Head of caudate nucleus (tissue), 42 donors: ENCODE measurements at regions of chr17 and their contacts with region 1.

Region 1: DNA sequence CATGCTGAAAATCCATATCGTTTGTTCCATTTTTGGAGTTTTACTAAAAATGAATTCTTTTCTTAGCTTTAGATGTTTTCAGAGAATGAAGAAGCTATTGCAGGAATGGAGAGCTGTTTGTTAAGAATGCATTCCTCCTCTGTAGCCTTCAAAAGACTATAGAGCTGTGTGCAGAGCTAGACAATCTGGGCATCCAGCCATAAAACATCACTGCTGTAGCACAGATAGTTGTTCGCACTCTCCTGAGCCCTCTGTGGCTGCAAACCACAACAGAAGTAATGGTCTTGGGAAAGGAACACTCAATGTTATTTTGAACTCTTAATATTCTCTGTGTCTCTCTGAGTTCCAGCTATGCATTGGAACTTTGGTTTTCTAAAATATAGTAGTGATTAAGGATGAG is 4.9 kb downstream of the TNRC6C start:
- DNase-seq: peak in 32 of 42 donors; percentile 24 to 87 (median 67)

Region 2: DNA sequence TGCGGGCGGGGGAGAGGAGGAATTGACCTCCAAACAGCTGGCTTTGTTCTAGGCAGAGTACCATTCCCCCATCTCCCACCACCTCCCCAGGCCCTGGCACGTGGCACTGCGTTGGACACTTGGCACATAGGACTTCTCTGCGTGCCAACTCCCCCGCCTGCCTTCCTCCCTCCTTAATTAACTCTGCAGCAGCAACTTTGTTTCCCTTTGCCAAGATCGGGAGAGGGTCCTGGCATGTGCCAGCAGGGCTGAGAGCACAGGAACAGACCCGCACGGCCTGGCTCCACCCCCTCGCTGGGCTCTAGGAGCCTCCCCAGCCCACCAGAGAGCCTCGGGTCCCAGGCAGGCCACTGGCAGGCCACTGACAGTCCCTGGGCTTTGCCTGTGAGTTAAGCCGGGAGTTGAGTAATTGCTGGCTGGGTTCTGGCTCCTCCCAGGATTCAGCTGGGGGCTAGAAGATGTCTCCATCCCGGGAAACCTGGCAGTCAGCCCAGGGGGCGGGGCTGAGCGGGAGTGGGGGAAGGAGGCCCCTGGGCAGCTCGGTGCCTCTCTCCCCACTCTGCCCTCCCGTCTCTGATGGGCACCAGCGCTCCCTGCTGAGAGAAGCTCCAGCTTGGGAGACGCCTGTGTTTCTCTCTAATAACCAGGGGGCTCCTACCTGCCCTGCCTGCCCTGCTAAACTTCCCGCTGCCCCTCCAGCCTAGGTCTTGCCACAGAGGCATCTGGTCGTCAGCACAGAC is 228.9 kb before region 1 on chr17:
- intact Hi-C with region 1: loop called (anchors 5 kb)
- DNase-seq: peak; percentile 78 to 98 (median 93)